ENCODE measurements at regions of chr2 and their contacts with region 1.

Region 1: DNA sequence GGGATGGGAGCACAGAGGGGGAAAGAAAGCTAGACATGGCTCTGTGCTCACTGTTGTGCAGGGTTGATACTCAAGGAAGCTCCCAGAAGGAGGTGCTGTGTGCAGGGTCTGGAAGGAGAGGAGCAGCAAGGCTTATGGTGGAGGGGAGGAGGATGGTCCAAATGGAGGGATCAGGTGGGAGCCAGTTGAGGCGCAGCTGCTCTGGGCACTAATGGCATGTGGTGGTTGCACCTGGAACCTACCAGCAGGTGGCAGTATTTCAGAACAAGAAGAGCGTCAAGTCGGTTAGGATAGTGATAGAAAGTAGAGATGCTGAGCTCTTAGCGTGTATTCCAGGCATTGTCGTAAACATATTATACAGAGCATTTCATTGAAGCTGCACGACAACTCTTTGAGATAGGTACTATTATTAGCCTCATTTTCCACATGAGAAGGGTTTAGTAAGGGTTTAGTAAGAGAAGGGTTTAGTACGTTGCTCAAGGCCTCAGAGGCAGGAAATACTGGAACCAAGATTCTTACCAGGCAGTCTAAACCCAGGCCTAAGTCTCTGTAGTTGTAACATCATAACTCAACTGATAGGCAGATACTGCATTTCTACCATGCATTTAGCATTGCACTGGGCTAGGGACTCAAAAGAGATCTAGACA is 223.7 kb downstream of the CYP26B1 start:
- DNase-seq: no peak
- ATAC-seq: peak; percentile 37
- H3K4me3 Mint-ChIP-seq: no peak overlapping the region
- H3K27ac Mint-ChIP-seq: no peak overlapping the region
- H3K4me1 Mint-ChIP-seq: no peaks in the 10 kb centered on the region
- H3K27me3 Mint-ChIP-seq: no peaks in the 10 kb centered on the region
- CTCF ChIP-seq: no peak

Region 2: DNA sequence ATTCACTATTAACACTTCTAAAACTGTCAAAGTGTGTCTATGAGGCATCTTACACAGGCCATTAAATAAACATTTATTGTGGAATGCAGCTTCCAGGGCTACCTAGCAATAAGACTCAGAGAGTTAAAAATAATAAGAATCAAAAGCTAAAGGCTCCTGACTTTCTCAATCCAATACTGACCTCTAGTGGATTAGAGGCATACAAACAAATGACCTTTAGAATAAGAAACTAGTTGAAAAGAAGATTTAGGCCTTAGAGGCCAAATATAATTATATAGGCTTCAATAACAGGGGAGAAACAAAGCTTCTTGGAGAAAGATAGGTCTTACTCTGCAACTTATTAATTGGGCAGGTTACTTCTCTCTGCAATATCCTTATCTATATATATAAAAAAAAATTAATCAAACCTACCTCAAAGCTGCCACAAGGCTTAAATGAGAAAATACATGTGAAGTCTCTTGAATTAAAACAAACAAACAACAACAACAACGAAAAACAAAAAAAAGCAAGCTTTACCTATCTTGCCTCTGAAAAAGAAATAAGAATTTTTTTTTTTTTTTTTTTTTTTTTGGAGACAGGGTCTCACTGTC is 655.7 kb after region 1 on chr2:
- CTCF ChIA-PET with region 1: interaction called, 39 read pairs
- POLR2A ChIA-PET with region 1: no interaction called
- intact Hi-C with region 1: no loop called
- DNase-seq: no peak
- ATAC-seq: no peak
- H3K4me3 Mint-ChIP-seq: no peak overlapping the region
- H3K27ac Mint-ChIP-seq: no peak overlapping the region
- H3K4me1 Mint-ChIP-seq: no peaks in the 10 kb centered on the region
- H3K27me3 Mint-ChIP-seq: no peaks in the 10 kb centered on the region
- CTCF ChIP-seq: no peak

Region 3: DNA sequence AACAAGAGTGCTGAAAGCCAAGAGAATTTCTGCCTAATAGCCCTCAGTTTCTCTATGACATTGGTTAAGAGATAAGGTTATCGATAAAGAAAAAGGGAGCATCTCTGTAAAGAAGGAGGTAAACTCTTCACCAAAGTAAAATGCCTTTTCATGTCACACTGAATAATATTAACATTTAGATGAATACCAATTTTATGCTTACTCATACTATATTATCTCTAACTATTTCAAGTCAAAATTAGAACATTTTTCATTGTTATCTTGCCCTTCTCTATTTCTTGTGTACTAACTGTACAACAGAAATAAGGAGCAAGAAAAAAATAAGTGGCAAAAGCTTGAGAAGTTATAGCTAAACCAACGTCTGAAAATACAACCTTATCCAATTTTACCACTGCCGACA is 774.3 kb after region 1 on chr2:
- CTCF ChIA-PET with region 1: no interaction called
- POLR2A ChIA-PET with region 1: no interaction called
- intact Hi-C with region 1: no loop called
- DNase-seq: no peak
- ATAC-seq: no peak
- H3K4me3 Mint-ChIP-seq: no peak overlapping the region
- H3K27ac Mint-ChIP-seq: no peak overlapping the region
- H3K4me1 Mint-ChIP-seq: no peaks in the 10 kb centered on the region
- H3K27me3 Mint-ChIP-seq: no peaks in the 10 kb centered on the region
- CTCF ChIP-seq: no peak

Region 4: GRCh38 chr2:72745679-72746368 is 821.8 kb after region 1 on chr2:
- CTCF ChIA-PET with region 1: interaction called, 20 read pairs
- POLR2A ChIA-PET with region 1: no interaction called
- intact Hi-C with region 1: no loop called
- DNase-seq: no peak
- ATAC-seq: no peak
- H3K4me3 Mint-ChIP-seq: no peak overlapping the region
- H3K27ac Mint-ChIP-seq: no peak overlapping the region
- H3K4me1 Mint-ChIP-seq: no peaks in the 10 kb centered on the region
- H3K27me3 Mint-ChIP-seq: no peaks in the 10 kb centered on the region
- CTCF ChIP-seq: no peak

Region 5: DNA sequence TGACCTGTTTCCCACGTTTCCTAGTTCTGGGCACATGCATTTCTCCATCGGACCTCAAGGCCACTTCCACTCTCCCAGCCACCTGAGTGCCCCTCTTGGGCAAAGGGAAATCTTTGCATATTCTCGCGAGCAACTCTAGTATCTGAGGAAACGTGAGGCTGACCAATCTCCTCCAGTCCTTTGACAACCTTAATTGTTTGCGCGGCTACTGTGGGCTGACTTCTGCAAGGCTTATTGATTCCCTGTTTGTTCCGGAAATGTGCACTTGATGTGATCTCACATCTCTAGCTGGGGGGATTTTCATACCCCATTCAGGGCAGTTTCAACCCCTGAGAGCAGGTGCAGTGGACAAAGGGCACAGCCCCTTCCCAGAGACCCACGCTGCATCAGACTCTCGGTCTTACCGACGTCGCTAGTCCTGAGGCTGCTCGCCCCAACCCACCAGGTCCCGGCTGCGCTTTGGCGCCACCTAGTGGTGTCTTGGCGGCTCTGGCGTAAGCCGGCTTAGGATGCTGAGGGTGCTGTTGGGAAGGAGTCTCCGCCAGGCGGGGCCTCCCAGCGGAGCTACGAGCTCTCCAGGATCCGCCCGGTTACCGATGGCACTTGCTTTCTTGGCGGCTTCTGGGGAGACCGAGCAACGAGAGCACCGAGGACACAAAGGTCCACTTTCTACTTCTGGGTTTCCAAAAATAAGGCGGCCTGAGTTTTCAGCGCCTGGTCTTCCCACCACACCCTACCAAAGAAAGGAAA is 938.4 kb after region 1 on chr2:
- CTCF ChIA-PET with region 1: no interaction called
- POLR2A ChIA-PET with region 1: no interaction called
- intact Hi-C with region 1: loop called (anchors 10 kb)
- DNase-seq: peak; percentile 77
- ATAC-seq: peak; percentile 89
- H3K4me3 Mint-ChIP-seq: peak overlapping the region; percentile 42
- H3K27ac Mint-ChIP-seq: no peak overlapping the region
- H3K4me1 Mint-ChIP-seq: peaks cover 16% of the 10 kb centered on the region
- H3K27me3 Mint-ChIP-seq: peaks cover 39% of the 10 kb centered on the region
- CTCF ChIP-seq: peak; percentile 87

Region 6: GRCh38 chr2:73284296-73285158 is 1360.5 kb after region 1 on chr2 and contains the start of gene FBXO41:
- CTCF ChIA-PET with region 1: no interaction called
- POLR2A ChIA-PET with region 1: no interaction called
- intact Hi-C with region 1: no loop called
- DNase-seq: peak; percentile 67
- ATAC-seq: peak; percentile 73
- H3K4me3 Mint-ChIP-seq: peak within 1 kb of the TSS; percentile 82
- H3K27ac Mint-ChIP-seq: peak within 1 kb of the TSS; percentile 89
- H3K4me1 Mint-ChIP-seq: peaks cover 36% of the 10 kb centered on the region
- H3K27me3 Mint-ChIP-seq: no peaks in the 10 kb centered on the region
- CTCF ChIP-seq: no peak
- total RNA-seq, gene FBXO41: 21.4 and 25.7 TPM in 2 replicates